Activated CD8-positive, alpha-beta T cell treated with anti-CD3 and anti-CD28 coated beads for 36 hours (primary cell): ENCODE measurements at regions of chr20 and their contacts with region 1.

Region 1: DNA sequence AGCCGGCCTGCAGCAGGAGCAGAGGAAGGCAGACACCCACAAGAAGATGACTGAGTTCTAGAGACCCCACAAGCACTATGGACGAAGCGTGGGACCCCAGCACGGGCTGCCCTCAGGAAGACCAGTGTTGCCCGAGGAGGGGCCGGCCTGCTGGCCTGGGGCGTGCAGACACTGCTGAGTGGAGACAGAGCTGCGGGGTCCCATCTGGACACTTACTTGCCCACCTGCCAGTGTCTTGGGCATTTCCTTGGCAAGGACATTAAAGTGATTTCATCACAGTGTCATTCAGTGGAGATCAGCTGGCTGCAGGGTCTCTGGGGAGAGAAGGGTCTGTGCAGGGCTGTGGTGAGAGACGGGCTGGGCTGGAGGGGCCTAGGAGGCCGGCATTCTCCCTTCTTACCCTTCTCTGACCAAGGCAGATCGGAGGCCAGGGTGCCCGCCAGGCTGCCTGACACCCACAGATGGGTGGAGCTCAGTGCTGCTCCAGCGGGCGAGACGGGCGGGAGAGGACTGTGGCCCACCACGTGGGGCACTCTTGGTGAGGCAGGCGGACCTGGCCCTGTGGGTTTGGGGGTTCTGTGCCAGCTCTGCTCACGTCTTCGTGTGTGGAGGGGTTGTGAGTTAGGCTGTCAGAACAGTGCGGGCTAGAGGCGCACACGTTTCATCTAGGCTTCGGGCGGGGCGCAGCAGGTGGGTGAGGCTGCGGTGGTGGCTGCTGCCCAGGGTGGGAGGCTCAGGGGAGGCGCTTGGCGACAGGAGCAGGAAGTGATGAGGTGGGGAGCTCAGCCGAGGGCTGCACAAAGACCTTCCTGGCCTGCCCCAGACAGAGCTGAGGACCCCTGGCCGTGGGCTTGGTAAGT is at the start of gene LIME1:
- DNase-seq: peak; percentile 85
- ATAC-seq: peak; percentile 56
- H3K4me3 Mint-ChIP-seq: peak within 1 kb of the TSS; percentile 72
- H3K27ac Mint-ChIP-seq: peak within 1 kb of the TSS; percentile 79
- H3K4me1 Mint-ChIP-seq: peaks cover 26% of the 10 kb centered on the region
- H3K27me3 Mint-ChIP-seq: no peaks in the 10 kb centered on the region
- CTCF ChIP-seq: no peak
- total RNA-seq, gene LIME1: 15.5 to 16.8 TPM

Region 2: GRCh38 chr20:63698739-63699465 is 37.2 kb before region 1 on chr20:
- CTCF ChIA-PET with region 1: no interaction called
- POLR2A ChIA-PET with region 1: interaction called, 12 read pairs
- intact Hi-C with region 1: no loop called
- DNase-seq: peak; percentile 72
- ATAC-seq: peak; percentile 55
- H3K4me3 Mint-ChIP-seq: no peak overlapping the region
- H3K27ac Mint-ChIP-seq: peak overlapping the region; percentile 67
- H3K4me1 Mint-ChIP-seq: peaks cover 23% of the 10 kb centered on the region
- H3K27me3 Mint-ChIP-seq: no peaks in the 10 kb centered on the region
- CTCF ChIP-seq: no peak

Region 3: DNA sequence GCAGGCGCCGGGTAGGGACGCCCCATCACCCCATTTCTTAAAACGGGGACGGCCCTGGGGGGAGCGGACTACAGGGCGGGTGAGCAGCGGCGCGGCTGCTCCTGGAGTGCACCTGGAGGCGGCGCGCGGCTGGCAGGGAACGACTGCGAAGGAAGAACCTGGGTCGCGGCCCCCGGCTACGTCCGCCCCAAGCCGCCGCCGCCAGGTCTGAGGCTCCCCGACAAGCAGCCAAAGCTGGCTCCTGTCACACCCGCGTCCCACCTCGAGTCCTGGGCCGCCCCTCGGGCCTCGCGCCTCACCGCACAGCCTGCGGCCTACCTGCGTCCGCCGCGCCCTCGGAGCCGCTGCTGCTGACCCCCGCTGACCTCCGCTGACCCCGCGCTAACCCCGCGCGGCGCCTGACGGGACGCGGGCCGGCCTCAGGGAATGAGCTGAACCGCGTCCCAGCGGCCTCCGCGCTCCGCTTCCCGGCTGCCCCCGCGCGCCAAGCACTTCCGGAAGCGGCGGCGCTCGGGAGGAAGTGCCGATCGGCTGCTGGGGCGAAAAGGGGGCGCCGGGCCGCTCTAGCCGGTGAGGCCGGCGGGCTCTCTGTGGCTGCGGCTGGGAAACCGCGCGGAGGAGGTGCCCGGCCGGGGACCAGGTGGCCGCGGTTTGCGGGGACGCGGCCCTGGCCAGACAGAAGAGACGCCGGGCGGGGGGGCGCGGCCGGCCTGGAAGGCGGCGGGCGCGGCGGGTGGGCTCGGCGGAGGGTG is 28.4 kb before region 1 on chr20 and contains the starts of genes ARFRP1 and ZGPAT:
- CTCF ChIA-PET with region 1: interaction called, 17 read pairs
- POLR2A ChIA-PET with region 1: interaction called, 10 read pairs
- intact Hi-C with region 1: no loop called
- DNase-seq: peak; percentile 89
- ATAC-seq: peak; percentile 90
- H3K4me3 Mint-ChIP-seq: peak within 1 kb of the TSS; percentile 87
- H3K27ac Mint-ChIP-seq: peak within 1 kb of the TSS; percentile 77
- H3K4me1 Mint-ChIP-seq: peaks cover 41% of the 10 kb centered on the region
- H3K27me3 Mint-ChIP-seq: no peaks in the 10 kb centered on the region
- CTCF ChIP-seq: no peak
- total RNA-seq, gene ARFRP1: 41.7 to 44.2 TPM
- total RNA-seq, gene ZGPAT: 22.4 to 22.5 TPM